ENCODE measurements at regions of chr7 and their contacts with region 1.

Region 1: GRCh38 chr7:111561885-111562732 is at the start of gene IMMP2L:
- DNase-seq: peak; percentile 72 to 94 (median 89)
- ATAC-seq: peak; percentile 91
- H3K4me3 ChIP-seq: peak within 1 kb of the TSS; percentile 68
- H3K4me3 Mint-ChIP-seq: peak within 1 kb of the TSS; percentile 97
- H3K27ac ChIP-seq: peak within 1 kb of the TSS in 1 of 2 donors; percentile 72
- H3K27ac Mint-ChIP-seq: peak within 1 kb of the TSS; percentile 93
- H3K4me1 ChIP-seq: peaks cover 19% of the 10 kb centered on the region
- H3K4me1 Mint-ChIP-seq: peaks cover 43% of the 10 kb centered on the region
- H3K27me3 ChIP-seq: peaks cover 0 to under 1% of the 10 kb centered on the region in 2 experiments
- H3K27me3 Mint-ChIP-seq: peaks cover 6% of the 10 kb centered on the region
- CTCF ChIP-seq: no peak
- total RNA-seq, gene IMMP2L: 8.9 to 18.7 TPM

Region 2: GRCh38 chr7:110595690-110596325 is 966.3 kb before region 1 on chr7:
- CTCF ChIA-PET with region 1: no interaction called
- POLR2A ChIA-PET with region 1: no interaction called
- intact Hi-C with region 1: loop called in 1 of 2 experiments (anchors 10 kb)
- DNase-seq: peak in 2 of 14 experiments; percentile 17 to 19
- ATAC-seq: no peak
- H3K4me3 ChIP-seq: no peak overlapping the region
- H3K4me3 Mint-ChIP-seq: no peak overlapping the region
- H3K27ac ChIP-seq: no peak overlapping the region
- H3K27ac Mint-ChIP-seq: no peak overlapping the region
- H3K4me1 ChIP-seq: no peaks in the 10 kb centered on the region
- H3K4me1 Mint-ChIP-seq: no peaks in the 10 kb centered on the region
- H3K27me3 ChIP-seq: no peaks in the 10 kb centered on the region
- H3K27me3 Mint-ChIP-seq: no peaks in the 10 kb centered on the region
- CTCF ChIP-seq: no peak

Region 3: DNA sequence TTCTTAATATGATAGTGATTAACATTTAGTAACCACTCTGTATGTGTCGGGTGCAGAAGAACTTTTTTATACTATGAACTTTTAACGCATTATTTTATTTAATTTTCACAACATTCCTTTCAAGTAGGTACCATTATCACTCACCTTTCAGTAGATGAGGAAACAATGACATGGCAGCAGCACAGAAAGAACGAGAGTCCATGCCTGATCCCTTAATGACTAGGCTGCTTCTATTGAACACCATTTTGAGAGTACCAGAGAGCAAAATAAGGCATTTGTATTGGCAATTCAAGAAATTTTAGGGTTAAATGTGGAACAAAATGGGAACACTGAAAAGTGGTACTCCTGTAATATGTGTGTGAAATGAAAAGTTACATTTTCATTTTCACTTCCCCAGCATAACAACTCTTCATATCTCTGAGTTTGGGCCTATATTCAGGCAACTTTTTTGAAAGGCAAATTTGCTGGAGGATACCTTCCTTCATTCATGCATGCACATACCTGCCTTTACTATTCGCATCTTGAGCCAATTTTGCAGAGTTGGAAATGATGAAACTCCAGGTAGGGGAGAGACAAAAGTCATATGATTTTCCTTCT is 458.3 kb before region 1 on chr7:
- CTCF ChIA-PET with region 1: no interaction called
- POLR2A ChIA-PET with region 1: interaction called, 3 read pairs
- intact Hi-C with region 1: loop called in 1 of 2 experiments (anchors 10 kb)
- DNase-seq: no peak
- ATAC-seq: no peak
- H3K4me3 ChIP-seq: no peak overlapping the region
- H3K4me3 Mint-ChIP-seq: no peak overlapping the region
- H3K27ac ChIP-seq: no peak overlapping the region
- H3K27ac Mint-ChIP-seq: peak overlapping the region; percentile 18
- H3K4me1 ChIP-seq: no peaks in the 10 kb centered on the region
- H3K4me1 Mint-ChIP-seq: peaks cover 68% of the 10 kb centered on the region
- H3K27me3 ChIP-seq: no peaks in the 10 kb centered on the region
- H3K27me3 Mint-ChIP-seq: no peaks in the 10 kb centered on the region
- CTCF ChIP-seq: no peak

Region 4: DNA sequence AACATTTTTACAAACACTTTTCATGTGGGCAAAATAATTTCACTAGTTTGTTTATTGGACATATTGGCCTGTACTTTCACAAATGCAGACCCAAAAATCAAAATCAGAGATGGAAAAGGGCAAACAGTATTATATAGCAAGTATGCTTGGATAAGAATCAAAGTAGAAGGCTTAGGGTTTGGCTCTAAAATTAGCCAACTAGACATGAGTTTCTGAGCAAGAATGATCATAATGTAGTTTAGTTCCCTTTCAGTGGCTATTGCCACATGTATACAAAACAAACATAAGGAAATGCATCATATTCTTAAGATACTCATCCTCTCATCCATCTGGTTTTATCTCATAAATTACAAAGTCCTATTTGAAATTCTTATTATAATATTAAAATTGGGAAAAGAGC is 132.3 kb before region 1 on chr7:
- CTCF ChIA-PET with region 1: no interaction called
- POLR2A ChIA-PET with region 1: no interaction called
- intact Hi-C with region 1: no loop called
- DNase-seq: no peak
- ATAC-seq: no peak
- H3K4me3 ChIP-seq: no peak overlapping the region
- H3K4me3 Mint-ChIP-seq: no peak overlapping the region
- H3K27ac ChIP-seq: no peak overlapping the region
- H3K27ac Mint-ChIP-seq: no peak overlapping the region
- H3K4me1 ChIP-seq: no peaks in the 10 kb centered on the region
- H3K4me1 Mint-ChIP-seq: no peaks in the 10 kb centered on the region
- H3K27me3 ChIP-seq: no peaks in the 10 kb centered on the region
- H3K27me3 Mint-ChIP-seq: no peaks in the 10 kb centered on the region
- CTCF ChIP-seq: no peak

Region 5: DNA sequence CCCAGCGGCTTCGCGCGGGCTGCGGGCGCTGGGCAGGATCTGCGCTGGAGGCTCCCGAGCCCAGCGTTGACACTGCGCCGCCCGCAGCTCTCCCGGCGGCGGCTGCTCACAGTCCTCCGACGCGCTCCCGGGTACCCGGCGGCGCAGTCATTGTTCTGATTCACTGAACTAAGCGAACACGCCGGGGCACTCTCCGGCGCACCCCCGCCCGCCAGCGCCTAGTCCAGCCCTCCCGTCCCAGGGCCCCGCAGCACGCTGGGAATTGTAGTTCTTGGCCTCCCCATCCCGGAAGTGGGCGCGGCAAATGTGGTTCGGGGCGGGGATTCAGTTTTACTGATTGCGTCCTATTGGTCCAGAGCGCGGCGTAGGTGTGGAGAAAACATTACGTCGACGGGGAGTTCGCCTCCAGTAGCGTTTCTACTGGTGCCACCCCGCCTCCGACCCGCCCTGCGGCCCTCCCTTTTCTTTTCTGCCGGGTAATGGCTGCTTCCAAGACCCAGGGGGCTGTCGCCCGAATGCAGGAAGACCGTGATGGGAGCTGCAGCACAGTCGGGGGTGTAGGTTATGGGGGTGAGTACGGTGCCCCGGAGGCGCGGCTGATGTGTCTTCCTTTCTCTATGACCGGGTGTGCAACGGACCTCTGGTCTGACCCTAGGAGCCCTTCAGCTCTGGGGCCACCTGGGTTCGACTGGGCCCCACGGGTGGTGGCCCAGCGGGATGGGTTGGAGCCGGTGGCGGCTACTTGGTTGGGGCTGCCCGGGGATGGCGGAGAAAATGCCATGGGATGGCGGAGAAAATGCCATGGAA is 644.3 kb after region 1 on chr7 and contains the starts of genes DOCK4 and ZNF277:
- CTCF ChIA-PET with region 1: no interaction called
- POLR2A ChIA-PET with region 1: interaction called, 3 read pairs
- intact Hi-C with region 1: loop called in 1 of 2 experiments (anchors 5 kb)
- DNase-seq: peak; percentile 98 to 100 (median 99)
- ATAC-seq: peak; percentile 87
- H3K4me3 ChIP-seq: peak within 1 kb of the TSS; percentile 87
- H3K4me3 Mint-ChIP-seq: peak within 1 kb of the TSS; percentile 99
- H3K27ac ChIP-seq: peak within 1 kb of the TSS in 1 of 2 donors; percentile 48
- H3K27ac Mint-ChIP-seq: peak within 1 kb of the TSS; percentile 91
- H3K4me1 ChIP-seq: peaks cover 29% of the 10 kb centered on the region
- H3K4me1 Mint-ChIP-seq: peaks cover 55% of the 10 kb centered on the region
- H3K27me3 ChIP-seq: peaks cover 18 to 30% of the 10 kb centered on the region in 2 experiments
- H3K27me3 Mint-ChIP-seq: peaks cover 30% of the 10 kb centered on the region
- CTCF ChIP-seq: no peak
- total RNA-seq, gene DOCK4: 0.31 to 0.38 TPM
- total RNA-seq, gene ZNF277: 21.6 to 22.5 TPM

Region 6: GRCh38 chr7:112398534-112398933 is 836.4 kb after region 1 on chr7:
- CTCF ChIA-PET with region 1: no interaction called
- POLR2A ChIA-PET with region 1: no interaction called
- intact Hi-C with region 1: loop called in 1 of 2 experiments (anchors 2 kb)
- DNase-seq: peak in 4 of 14 experiments; percentile 21 to 57 (median 54)
- ATAC-seq: peak; percentile 80
- H3K4me3 ChIP-seq: no peak overlapping the region
- H3K4me3 Mint-ChIP-seq: peak overlapping the region; percentile 46
- H3K27ac ChIP-seq: peak overlapping the region in 1 of 2 donors; percentile 10
- H3K27ac Mint-ChIP-seq: peak overlapping the region; percentile 12
- H3K4me1 ChIP-seq: peaks cover 12% of the 10 kb centered on the region
- H3K4me1 Mint-ChIP-seq: peaks cover 36% of the 10 kb centered on the region
- H3K27me3 ChIP-seq: no peaks in the 10 kb centered on the region
- H3K27me3 Mint-ChIP-seq: no peaks in the 10 kb centered on the region
- CTCF ChIP-seq: no peak

Region 7: GRCh38 chr7:112939574-112940314 is 1377.6 kb after region 1 on chr7:
- CTCF ChIA-PET with region 1: no interaction called
- POLR2A ChIA-PET with region 1: interaction called, 3 read pairs
- intact Hi-C with region 1: loop called in 1 of 2 experiments (anchors 5 kb)
- DNase-seq: peak; percentile 98 to 100 (median 99)
- ATAC-seq: peak; percentile 95
- H3K4me3 ChIP-seq: peak overlapping the region; percentile 83
- H3K4me3 Mint-ChIP-seq: peak overlapping the region; percentile 98
- H3K27ac ChIP-seq: peak overlapping the region; percentile 53 to 66
- H3K27ac Mint-ChIP-seq: peak overlapping the region; percentile 88
- H3K4me1 ChIP-seq: peaks cover 18% of the 10 kb centered on the region
- H3K4me1 Mint-ChIP-seq: peaks cover 53% of the 10 kb centered on the region
- H3K27me3 ChIP-seq: no peaks in the 10 kb centered on the region
- H3K27me3 Mint-ChIP-seq: no peaks in the 10 kb centered on the region
- CTCF ChIP-seq: no peak

Region 8: GRCh38 chr7:113118074-113118959 is 1556.2 kb after region 1 on chr7 and contains the start of gene SMIM30:
- CTCF ChIA-PET with region 1: no interaction called
- POLR2A ChIA-PET with region 1: no interaction called
- intact Hi-C with region 1: loop called in 1 of 2 experiments (anchors 5 kb)
- DNase-seq: peak; percentile 79 to 94 (median 86)
- ATAC-seq: peak; percentile 100
- H3K4me3 ChIP-seq: peak within 1 kb of the TSS; percentile 72
- H3K4me3 Mint-ChIP-seq: peak within 1 kb of the TSS; percentile 94
- H3K27ac ChIP-seq: peak within 1 kb of the TSS; percentile 49 to 86
- H3K27ac Mint-ChIP-seq: peak within 1 kb of the TSS; percentile 88
- H3K4me1 ChIP-seq: peaks cover 4% of the 10 kb centered on the region
- H3K4me1 Mint-ChIP-seq: peaks cover 21% of the 10 kb centered on the region
- H3K27me3 ChIP-seq: no peaks in the 10 kb centered on the region
- H3K27me3 Mint-ChIP-seq: no peaks in the 10 kb centered on the region
- CTCF ChIP-seq: no peak
- total RNA-seq, gene SMIM30: 2.7 to 3.5 TPM

Measured in CD4-positive, alpha-beta T cell (primary cell).